Kidney (tissue), 22 donors: ENCODE measurements at regions of chr12 and their contacts with region 1.

Region 1: DNA sequence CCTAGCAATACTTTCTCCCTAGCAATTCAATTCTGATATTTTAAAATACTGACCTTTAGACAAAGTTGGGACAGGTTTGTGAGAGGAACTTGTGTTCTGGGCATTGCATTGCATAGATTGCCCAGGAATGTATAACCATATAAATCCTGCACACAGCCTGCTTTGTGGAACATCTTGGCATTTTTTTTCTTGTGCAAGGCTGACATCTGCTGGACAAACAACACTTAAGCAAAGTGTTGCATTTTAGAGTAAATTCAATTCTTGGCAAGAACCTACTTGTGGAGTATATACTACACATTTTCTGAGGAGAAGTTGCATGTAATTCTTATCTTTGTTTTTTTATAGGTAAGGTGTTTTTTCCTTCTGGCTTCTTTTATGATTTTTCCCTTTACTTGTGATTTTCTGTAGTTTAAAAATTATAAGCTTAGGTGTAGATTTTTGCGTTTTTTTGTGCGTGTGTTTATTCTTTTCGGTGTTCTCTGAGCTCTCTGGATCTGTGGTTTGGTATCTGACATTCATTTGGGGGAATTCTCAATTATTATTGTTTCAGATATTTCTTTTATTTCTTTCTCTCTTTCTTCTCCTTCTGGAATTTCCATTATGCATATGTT is 26.4 kb downstream of the TESPA1 start:
- DNase-seq: peak in 4 of 5 donors; percentile 50 to 84 (median 77)
- H3K4me3 ChIP-seq: no peak overlapping the region
- H3K27ac ChIP-seq: no peak overlapping the region
- H3K4me1 ChIP-seq: no peaks in the 10 kb centered on the region
- H3K27me3 ChIP-seq: no peaks in the 10 kb centered on the region
- CTCF ChIP-seq: peak; percentile 73

Region 2: DNA sequence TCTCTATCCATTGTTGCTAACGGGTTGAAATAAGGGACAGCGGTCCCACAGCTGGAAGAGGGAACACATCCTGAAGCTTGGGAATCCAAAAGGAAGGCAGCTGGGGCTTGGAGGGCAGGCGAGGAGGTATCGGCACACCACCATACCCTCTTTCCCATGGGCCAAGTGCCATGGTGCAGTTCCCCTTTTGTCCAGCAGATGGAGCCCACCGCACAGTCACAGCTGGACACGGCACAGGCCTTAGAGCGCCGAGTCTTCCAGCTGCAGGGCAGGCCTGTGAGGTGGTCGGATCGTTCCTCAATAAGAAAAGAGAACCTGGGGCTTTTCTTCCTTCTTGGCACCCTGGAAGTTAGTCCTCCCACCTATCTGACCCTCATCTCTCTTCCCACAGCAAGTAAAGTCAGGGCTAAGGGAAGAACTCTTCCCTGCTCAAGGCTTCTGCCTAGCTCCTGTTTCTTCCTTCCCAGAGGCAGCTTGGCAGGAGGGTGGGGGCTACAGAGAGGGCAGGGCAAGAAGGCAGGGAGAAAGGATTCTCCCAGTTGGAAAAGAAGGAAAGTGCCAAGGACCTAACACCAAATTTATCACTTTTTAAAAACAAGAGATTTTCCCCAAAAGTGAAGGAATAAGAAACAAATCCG is 378.3 kb before region 1 on chr12:
- intact Hi-C with region 1: loop called (anchors 10 kb)
- DNase-seq: peak; percentile 86 to 93 (median 91)
- H3K4me3 ChIP-seq: no peak overlapping the region
- H3K27ac ChIP-seq: no peak overlapping the region
- H3K4me1 ChIP-seq: peaks cover 0 to 6% (median 0%) of the 10 kb centered on the region in 3 donors
- H3K27me3 ChIP-seq: no peaks in the 10 kb centered on the region
- CTCF ChIP-seq: peak; percentile 99

Region 3: GRCh38 chr12:54759751-54760150 is 198.4 kb before region 1 on chr12:
- intact Hi-C with region 1: loop called (anchors 10 kb)
- DNase-seq: peak in 2 of 5 donors; percentile 22 to 33
- H3K4me3 ChIP-seq: no peak overlapping the region
- H3K27ac ChIP-seq: no peak overlapping the region
- H3K4me1 ChIP-seq: no peaks in the 10 kb centered on the region
- H3K27me3 ChIP-seq: no peaks in the 10 kb centered on the region
- CTCF ChIP-seq: peak; percentile 28